Activated CD8-positive, alpha-beta T cell treated with anti-CD3 and anti-CD28 coated beads, Interleukin-2, amount 10 ng/mL, durations not matched to agents 7 days and 5 days (primary cell): ENCODE measurements at regions of chr20 and their contacts with region 1.

Region 1: GRCh38 chr20:13819885-13820645 is 35.2 kb downstream of the NDUFAF5 start:
- DNase-seq: peak; percentile 22
- ATAC-seq: peak; percentile 58
- H3K4me3 Mint-ChIP-seq: no peak overlapping the region
- H3K27ac Mint-ChIP-seq: no peak overlapping the region
- H3K4me1 Mint-ChIP-seq: no peaks in the 10 kb centered on the region
- H3K27me3 Mint-ChIP-seq: no peaks in the 10 kb centered on the region

Region 2: DNA sequence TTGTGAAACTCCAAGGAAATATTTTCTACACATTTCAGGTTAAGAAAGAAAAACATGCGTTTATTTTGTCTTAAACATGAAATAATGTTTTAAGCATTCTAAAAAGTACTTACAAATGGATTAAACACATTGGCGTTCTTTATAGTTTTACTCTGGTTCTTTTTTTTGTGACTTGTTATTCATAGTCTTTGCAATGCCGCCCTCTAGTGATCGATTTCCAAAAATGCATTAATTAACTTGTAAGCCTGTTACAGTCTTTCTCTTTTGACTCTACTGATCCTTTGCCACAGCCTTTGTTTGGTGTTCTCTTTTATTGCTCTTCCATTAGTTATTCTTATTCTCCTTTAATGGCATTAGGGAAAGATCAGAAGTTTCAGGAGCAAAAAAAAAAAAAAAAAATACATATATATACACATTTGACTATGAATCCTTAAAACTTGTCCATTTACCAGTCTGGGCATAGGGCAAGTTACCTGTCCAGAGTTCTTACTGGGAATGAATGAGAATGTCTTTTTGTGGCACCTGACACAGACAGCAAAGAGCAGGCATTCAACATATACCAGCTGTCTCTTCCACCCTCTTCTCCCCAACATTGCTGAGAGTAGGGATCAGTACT is 235.2 kb after region 1 on chr20:
- CTCF ChIA-PET with region 1: interaction called, 11 read pairs
- POLR2A ChIA-PET with region 1: no interaction called
- DNase-seq: peak; percentile 46
- ATAC-seq: no peak
- H3K4me3 Mint-ChIP-seq: no peak overlapping the region
- H3K27ac Mint-ChIP-seq: no peak overlapping the region
- H3K4me1 Mint-ChIP-seq: no peaks in the 10 kb centered on the region
- H3K27me3 Mint-ChIP-seq: peaks cover 5% of the 10 kb centered on the region